Naive thymus-derived CD4-positive, alpha-beta T cell (primary cell): ENCODE measurements at regions of chr14 and their contacts with region 1.

Region 1: DNA sequence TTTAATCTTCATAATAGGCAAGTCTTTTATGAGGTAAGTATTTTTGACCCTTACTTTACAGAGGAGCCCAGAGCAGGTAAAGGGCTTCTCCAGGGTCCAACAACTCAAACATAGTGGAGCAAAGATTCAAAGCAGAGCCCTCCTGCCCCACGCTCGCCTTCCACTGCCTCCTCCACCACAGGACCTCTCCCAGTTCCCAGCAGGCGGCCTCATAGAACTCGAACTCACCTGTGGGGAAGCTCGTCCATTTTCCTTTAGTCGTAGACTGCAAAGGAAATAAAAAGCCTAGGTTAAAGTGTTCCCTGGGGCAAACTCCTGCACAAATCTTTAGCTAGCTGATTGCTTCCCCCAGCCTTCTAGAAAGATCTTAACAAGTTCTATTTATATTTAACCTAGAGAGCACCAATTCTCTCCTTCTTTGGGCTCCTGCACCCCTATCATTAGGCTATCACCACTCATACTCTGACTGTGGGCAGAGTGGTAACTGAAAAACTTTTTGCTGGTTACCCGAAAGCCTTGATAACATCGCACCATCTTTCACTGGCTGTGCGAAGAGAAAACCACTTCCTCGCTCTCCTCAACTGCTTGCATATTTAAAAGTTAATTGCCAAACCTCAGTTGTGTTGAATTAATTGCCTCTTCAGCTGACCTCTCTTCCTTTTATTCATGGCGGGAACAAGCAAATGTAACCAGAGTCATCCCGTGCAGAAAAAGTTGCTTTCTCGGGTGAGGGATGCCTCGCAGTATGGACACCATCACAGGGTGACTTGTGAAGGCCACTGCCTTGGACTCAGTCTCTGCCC is 299.6 kb downstream of the DPF3 start:
- DNase-seq: peak in 6 of 9 donors; percentile 32 to 51 (median 36)
- ATAC-seq: peak; percentile 86
- H3K4me3 ChIP-seq: no peak overlapping the region
- H3K4me3 Mint-ChIP-seq: peak overlapping the region; percentile 18 to 75 (median 68)
- H3K27ac ChIP-seq: no peak overlapping the region
- H3K27ac Mint-ChIP-seq: peak overlapping the region; percentile 7 to 83 (median 52)
- H3K4me1 ChIP-seq: peaks cover 20 to 45% of the 10 kb centered on the region in 2 donors
- H3K4me1 Mint-ChIP-seq: peaks cover 28 to 63% (median 55%) of the 10 kb centered on the region in 7 donors
- H3K27me3 ChIP-seq: peaks cover 0 to 6% of the 10 kb centered on the region in 2 donors
- H3K27me3 Mint-ChIP-seq: peaks cover 0 to 39% (median 9%) of the 10 kb centered on the region in 5 donors

Region 2: DNA sequence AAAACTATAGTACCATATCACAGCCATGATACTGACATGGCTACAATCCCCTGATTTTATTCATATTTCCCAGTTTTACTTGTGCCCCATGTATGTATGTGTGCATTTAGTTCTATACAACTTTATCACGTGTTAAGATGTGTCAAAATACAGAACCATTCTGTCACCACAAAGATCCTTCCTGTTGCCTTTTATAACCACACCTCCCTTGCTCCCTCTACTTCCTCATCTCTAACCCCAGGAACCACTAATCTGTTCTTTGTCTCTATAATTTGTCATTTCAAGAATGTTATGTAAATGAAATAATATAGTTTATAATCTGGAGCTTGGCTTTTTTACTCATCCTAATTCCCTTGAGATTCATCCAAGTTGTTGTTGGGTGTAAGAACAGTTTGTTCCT is 58.8 kb before region 1 on chr14:
- CTCF ChIA-PET with region 1: no interaction called
- POLR2A ChIA-PET with region 1: no interaction called
- intact Hi-C with region 1: loop called in 1 of 2 experiments (anchors 1 kb)
- DNase-seq: peak in 4 of 9 donors; percentile 26 to 45 (median 34)
- ATAC-seq: peak; percentile 78
- H3K4me3 ChIP-seq: no peak overlapping the region
- H3K4me3 Mint-ChIP-seq: peak overlapping the region in 9 of 10 donors; percentile 8 to 69 (median 55)
- H3K27ac ChIP-seq: no peak overlapping the region
- H3K27ac Mint-ChIP-seq: peak overlapping the region in 5 of 9 donors; percentile 1 to 35 (median 32)
- H3K4me1 ChIP-seq: peaks cover 43 to 47% of the 10 kb centered on the region in 2 donors
- H3K4me1 Mint-ChIP-seq: peaks cover 43 to 75% (median 64%) of the 10 kb centered on the region in 7 donors
- H3K27me3 ChIP-seq: no peaks in the 10 kb centered on the region
- H3K27me3 Mint-ChIP-seq: peaks cover 0 to 23% (median 0%) of the 10 kb centered on the region in 5 donors

Region 3: GRCh38 chr14:72893636-72894321 is 299.5 kb after region 1 on chr14 and contains the start of gene DPF3:
- CTCF ChIA-PET with region 1: no interaction called
- POLR2A ChIA-PET with region 1: no interaction called
- intact Hi-C with region 1: loop called in 1 of 2 experiments (anchors 2 kb)
- DNase-seq: peak; percentile 80 to 91 (median 86)
- ATAC-seq: peak; percentile 99
- H3K4me3 ChIP-seq: peak within 1 kb of the TSS; percentile 74
- H3K4me3 Mint-ChIP-seq: peak within 1 kb of the TSS; percentile 91 to 99 (median 97)
- H3K27ac ChIP-seq: peak within 1 kb of the TSS; percentile 51
- H3K27ac Mint-ChIP-seq: peak within 1 kb of the TSS; percentile 22 to 94 (median 56)
- H3K4me1 ChIP-seq: peaks cover 9 to 20% of the 10 kb centered on the region in 2 donors
- H3K4me1 Mint-ChIP-seq: peaks cover 20 to 36% (median 24%) of the 10 kb centered on the region in 7 donors
- H3K27me3 ChIP-seq: peaks cover 6 to 10% of the 10 kb centered on the region in 2 donors
- H3K27me3 Mint-ChIP-seq: peaks cover 37 to 72% (median 53%) of the 10 kb centered on the region in 5 donors
- total RNA-seq, gene DPF3: 0.24 to 5.5 (median 0.61) TPM in 4 of 5 experiments, not detected in the other

Region 4: DNA sequence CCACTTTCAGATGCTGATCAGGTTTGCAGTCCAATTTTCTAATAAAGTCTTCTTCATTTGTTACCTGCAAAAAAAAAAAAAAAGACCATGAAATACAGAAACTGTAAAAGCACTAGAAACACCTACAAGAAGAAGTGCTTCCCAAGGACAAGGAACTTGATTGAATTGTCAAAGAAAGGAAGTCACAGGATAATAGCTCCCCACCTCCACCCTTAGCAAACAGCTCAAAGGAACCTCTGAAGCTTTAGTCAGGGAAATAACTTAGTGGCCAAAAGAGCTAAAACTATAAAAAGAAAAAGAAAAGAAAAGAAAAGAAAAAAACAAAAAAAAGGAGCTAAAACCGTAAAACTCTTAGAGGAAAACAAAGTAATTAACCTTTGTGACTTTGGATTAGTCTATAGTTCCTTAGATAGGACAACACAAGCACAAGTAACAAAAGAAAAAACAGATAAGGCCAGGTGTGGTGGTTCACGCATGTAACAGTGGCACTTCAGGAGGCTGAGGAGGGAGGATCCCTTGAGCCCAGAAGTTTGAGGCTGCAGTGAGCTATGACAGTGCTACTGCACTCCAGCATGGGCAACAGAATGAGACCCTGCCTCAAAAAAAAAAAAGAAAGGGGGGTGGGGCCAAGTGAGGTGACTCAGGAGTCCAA is 404.1 kb after region 1 on chr14:
- CTCF ChIA-PET with region 1: no interaction called
- POLR2A ChIA-PET with region 1: no interaction called
- intact Hi-C with region 1: no loop called
- DNase-seq: no peak
- ATAC-seq: no peak
- H3K4me3 ChIP-seq: no peak overlapping the region
- H3K4me3 Mint-ChIP-seq: no peak overlapping the region
- H3K27ac ChIP-seq: no peak overlapping the region
- H3K27ac Mint-ChIP-seq: no peak overlapping the region
- H3K4me1 ChIP-seq: no peaks in the 10 kb centered on the region
- H3K4me1 Mint-ChIP-seq: peaks cover 2 to 12% (median 4%) of the 10 kb centered on the region in 7 donors
- H3K27me3 ChIP-seq: no peaks in the 10 kb centered on the region
- H3K27me3 Mint-ChIP-seq: no peaks in the 10 kb centered on the region